Ovary (tissue), 10 donors: ENCODE measurements at regions of chr17 and their contacts with region 1.

Region 1: DNA sequence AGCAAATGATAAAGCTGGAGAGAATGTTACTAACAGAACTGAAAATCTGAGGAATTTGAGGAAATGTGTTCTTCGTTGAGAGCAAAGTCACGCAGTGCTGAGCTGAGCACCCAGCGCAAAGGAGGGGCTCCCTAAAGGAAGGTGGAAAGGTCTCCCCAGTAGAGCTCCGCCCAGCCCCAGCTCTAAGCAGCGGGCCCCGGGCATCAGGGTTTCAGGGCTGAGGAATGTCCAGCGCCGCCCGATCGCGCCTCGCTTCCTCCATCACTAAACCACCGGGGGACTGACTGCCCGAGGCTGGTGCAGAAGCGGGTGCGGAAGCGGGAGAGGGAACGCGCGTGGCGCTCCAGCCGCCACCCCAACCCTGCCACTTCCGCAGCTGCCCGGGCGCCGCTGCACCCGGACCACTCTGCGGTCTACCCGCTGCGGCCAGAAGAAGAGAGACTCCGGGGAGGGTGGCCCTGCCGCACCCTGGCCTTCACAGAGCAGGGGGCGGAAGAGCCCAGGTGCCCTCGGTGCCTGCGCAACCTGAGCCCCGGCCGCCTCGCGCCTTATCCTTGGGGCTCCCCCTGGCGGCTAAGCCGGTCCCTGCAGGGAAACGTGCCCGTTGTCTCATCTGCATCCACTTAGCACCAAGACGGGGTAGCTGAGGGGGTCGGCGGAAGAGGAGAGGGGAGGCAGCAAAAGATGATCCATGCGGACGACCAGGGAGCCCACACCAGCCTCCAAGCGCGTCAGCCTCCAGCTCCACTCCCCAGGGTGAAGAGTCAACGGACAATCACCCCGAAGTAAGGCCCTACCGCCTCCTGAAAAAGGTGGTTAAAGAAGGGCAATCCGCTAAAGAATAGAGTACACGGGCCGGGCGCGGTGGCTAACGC is 12.4 kb upstream of the GUCY2D start:
- DNase-seq: peak; percentile 74 to 91 (median 85)
- H3K4me3 ChIP-seq: peak overlapping the region; percentile 41
- H3K27ac ChIP-seq: peak overlapping the region in 1 of 2 donors; percentile 33
- H3K4me1 ChIP-seq: no peaks in the 10 kb centered on the region
- H3K27me3 ChIP-seq: no peaks in the 10 kb centered on the region
- CTCF ChIP-seq: peak; percentile 91 to 99 (median 93)
- EP300 ChIP-seq: no peak
- POLR2A ChIP-seq: no peak

Region 2: GRCh38 chr17:7745748-7746470 is 244.1 kb before region 1 on chr17:
- intact Hi-C with region 1: loop called in 2 of 4 experiments (anchors 10 kb)
- DNase-seq: peak; percentile 29 to 56 (median 41)
- H3K4me3 ChIP-seq: no peak overlapping the region
- H3K27ac ChIP-seq: no peak overlapping the region
- H3K4me1 ChIP-seq: peaks cover 3% of the 10 kb centered on the region
- H3K27me3 ChIP-seq: no peaks in the 10 kb centered on the region
- CTCF ChIP-seq: no peak
- EP300 ChIP-seq: no peak
- POLR2A ChIP-seq: no peak

Region 3: GRCh38 chr17:7825206-7825990 is 164.6 kb before region 1 on chr17:
- intact Hi-C with region 1: loop called in 2 of 4 experiments (anchors 5 kb)
- DNase-seq: no peak
- H3K4me3 ChIP-seq: no peak overlapping the region
- H3K27ac ChIP-seq: no peak overlapping the region
- H3K4me1 ChIP-seq: no peaks in the 10 kb centered on the region
- H3K27me3 ChIP-seq: no peaks in the 10 kb centered on the region
- CTCF ChIP-seq: no peak
- EP300 ChIP-seq: no peak
- POLR2A ChIP-seq: no peak

Region 4: GRCh38 chr17:7915611-7916382 is 74.2 kb before region 1 on chr17 and contains the start of gene RNF227:
- intact Hi-C with region 1: loop called (anchors 5 to 10 kb)
- DNase-seq: peak; percentile 94 to 97 (median 96)
- H3K4me3 ChIP-seq: peak within 1 kb of the TSS; percentile 56
- H3K27ac ChIP-seq: peak within 1 kb of the TSS; percentile 97 to 98
- H3K4me1 ChIP-seq: peaks cover 4% of the 10 kb centered on the region
- H3K27me3 ChIP-seq: no peaks in the 10 kb centered on the region
- CTCF ChIP-seq: peak in 2 of 3 donors; percentile 6 to 19
- EP300 ChIP-seq: no peak
- POLR2A ChIP-seq: peak; percentile 58
- total RNA-seq, gene RNF227: 2.7 to 16.5 (median 5.2) TPM

Region 5: GRCh38 chr17:8038954-8039610 is 49.1 kb after region 1 on chr17 and contains the start of gene ALOX15B:
- intact Hi-C with region 1: no loop called
- DNase-seq: no peak
- H3K4me3 ChIP-seq: no peak within 1 kb of the TSS
- H3K27ac ChIP-seq: no peak within 1 kb of the TSS
- H3K4me1 ChIP-seq: no peaks in the 10 kb centered on the region
- H3K27me3 ChIP-seq: no peaks in the 10 kb centered on the region
- CTCF ChIP-seq: no peak
- EP300 ChIP-seq: no peak
- POLR2A ChIP-seq: no peak
- total RNA-seq, gene ALOX15B: 0.23 to 14.9 (median 0.78) TPM in 6 of 7 donors, not detected in the other

Region 6: DNA sequence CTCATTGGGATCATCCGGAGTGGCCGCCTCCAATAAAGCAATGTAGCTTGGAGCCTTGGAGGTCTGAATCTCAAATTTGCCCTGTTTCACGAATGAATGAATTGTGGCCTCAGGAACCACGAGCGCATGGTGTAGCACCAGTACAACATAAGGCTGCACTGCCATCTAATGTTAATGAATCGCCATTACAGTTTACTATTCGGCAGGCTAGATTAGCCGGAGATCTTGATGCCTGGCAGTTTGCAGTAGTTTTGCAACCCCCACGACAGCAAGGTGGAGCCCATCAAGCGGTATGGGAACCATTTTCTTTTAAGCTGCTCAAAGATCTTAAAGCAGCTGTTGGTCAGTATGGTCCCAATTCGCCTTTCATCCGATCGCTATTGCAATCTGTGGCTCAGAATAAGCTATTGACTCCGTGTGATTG is 67.7 kb after region 1 on chr17:
- intact Hi-C with region 1: loop called in 1 of 4 experiments (anchors 5 kb)
- DNase-seq: peak in 2 of 5 donors; percentile 37 to 38
- H3K4me3 ChIP-seq: no peak overlapping the region
- H3K27ac ChIP-seq: no peak overlapping the region
- H3K4me1 ChIP-seq: no peaks in the 10 kb centered on the region
- H3K27me3 ChIP-seq: no peaks in the 10 kb centered on the region
- CTCF ChIP-seq: peak; percentile 25 to 75 (median 66)
- EP300 ChIP-seq: no peak
- POLR2A ChIP-seq: no peak